Common myeloid progenitor, CD34-positive (primary cell): ENCODE measurements at regions of chr17 and their contacts with region 1.

Region 1: DNA sequence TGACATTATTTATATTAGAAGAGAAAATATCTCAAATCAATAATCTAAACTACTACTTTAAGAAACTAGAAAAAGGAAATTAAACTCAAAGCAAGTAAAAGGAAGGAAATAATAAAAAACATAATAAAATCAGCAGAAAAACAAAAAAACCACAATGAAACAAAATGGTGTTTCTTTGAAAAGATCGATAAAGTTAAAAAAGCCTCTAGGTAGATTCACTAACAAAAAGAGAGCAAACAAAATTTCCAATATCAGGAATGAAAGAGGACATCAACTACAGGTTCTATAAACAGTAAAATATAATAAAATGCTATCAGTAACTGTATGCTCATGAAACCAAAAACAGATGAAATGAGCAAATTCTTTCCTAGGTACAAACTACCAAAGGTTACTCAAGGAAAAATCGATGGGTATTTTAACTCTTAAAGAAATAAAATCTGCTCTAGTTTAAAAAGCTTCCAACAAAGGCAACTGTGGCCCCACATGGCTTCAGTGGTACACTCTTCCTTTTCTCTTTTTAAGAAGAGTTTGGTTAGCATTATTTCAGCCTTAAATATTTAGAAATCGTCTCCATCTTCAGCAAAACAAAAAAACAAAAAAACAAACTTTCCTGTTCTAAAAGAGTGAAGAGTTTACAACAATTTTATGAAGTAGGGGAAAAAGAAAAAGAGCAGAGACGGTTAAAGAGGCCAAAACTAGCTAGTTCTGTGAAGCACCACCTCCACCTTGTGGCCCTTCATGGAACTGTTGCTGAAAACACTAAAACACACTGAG is 102.2 kb downstream of the TRIM37 start:
- DNase-seq: peak; percentile 65 to 82 (median 70)
- H3K4me3 ChIP-seq: peak overlapping the region in 1 of 7 experiments; percentile 2
- H3K27ac ChIP-seq: peak overlapping the region in 1 of 2 experiments; percentile 25
- H3K4me1 ChIP-seq: peaks cover 0 to 20% (median 13%) of the 10 kb centered on the region in 4 experiments
- H3K27me3 ChIP-seq: no peaks in the 10 kb centered on the region

Region 2: GRCh38 chr17:58710936-58711775 is 293.4 kb before region 1 on chr17:
- CTCF ChIA-PET with region 1: interaction called, 15 read pairs
- POLR2A ChIA-PET with region 1: no interaction called
- DNase-seq: peak; percentile 58 to 82 (median 73)
- H3K4me3 ChIP-seq: no peak overlapping the region
- H3K27ac ChIP-seq: no peak overlapping the region
- H3K4me1 ChIP-seq: no peaks in the 10 kb centered on the region
- H3K27me3 ChIP-seq: no peaks in the 10 kb centered on the region